ENCODE measurements at regions of chr7 and their contacts with region 1.

Region 1: GRCh38 chr7:66654123-66654732 is 25.5 kb downstream of the KCTD7 start:
- DNase-seq: peak; percentile 100
- ATAC-seq: peak; percentile 94
- H3K4me3 Mint-ChIP-seq: peak overlapping the region; percentile 100
- H3K27ac Mint-ChIP-seq: peak overlapping the region; percentile 98
- H3K4me1 Mint-ChIP-seq: peaks cover 32% of the 10 kb centered on the region
- H3K27me3 Mint-ChIP-seq: no peaks in the 10 kb centered on the region

Region 2: DNA sequence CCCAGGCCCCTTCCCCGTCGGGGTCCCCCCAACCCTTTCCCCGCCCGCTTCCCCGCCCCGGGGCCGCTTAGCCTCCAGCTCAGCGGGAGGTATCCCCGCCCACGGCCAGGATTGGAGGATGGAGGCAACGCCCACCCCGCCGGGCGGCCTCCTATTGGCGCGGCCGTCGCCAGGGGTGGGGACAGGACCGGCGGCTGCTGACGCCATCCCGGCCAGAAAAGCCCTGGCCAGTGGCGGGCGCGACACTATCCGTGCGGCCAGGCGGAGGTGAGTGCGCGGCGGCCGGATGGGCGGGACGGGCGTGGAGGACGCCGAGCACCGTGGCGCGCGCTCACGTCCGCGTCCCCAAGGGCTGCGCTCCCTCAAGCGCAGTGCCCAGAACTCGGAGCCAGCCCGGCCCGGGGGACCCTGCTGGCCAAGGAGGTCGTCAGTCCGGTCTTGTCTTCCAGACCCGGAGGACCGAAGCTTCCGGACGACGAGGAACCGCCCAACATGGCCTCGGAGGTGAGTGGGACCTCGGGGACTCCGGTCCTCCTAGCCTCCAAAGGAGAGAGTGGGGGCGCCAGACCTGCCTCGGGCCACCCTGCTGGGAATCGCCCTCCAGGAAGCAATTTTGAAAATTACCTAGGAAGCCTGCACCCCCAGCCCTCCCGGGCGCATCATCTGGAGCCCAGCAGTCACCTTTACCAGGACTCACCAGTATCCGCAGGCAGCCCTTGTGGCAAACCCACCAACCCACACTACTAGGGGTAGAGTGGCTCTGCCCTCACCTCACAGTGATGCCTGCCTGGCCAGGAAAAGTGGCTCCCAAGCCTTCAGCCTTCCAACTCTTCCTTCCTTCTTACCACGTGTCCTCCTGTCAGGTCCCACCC is 578.4 kb before region 1 on chr7 and contains the start of gene ASL:
- CTCF ChIA-PET with region 1: no interaction called
- POLR2A ChIA-PET with region 1: no interaction called
- intact Hi-C with region 1: loop called in 1 of 2 experiments (anchors 1 kb)
- DNase-seq: peak; percentile 94
- ATAC-seq: peak; percentile 99
- H3K4me3 Mint-ChIP-seq: peak within 1 kb of the TSS; percentile 63
- H3K27ac Mint-ChIP-seq: no peak within 1 kb of the TSS
- H3K4me1 Mint-ChIP-seq: peaks cover 15% of the 10 kb centered on the region
- H3K27me3 Mint-ChIP-seq: no peaks in the 10 kb centered on the region
- total RNA-seq, gene ASL: 12.7 to 18.5 TPM

Region 3: DNA sequence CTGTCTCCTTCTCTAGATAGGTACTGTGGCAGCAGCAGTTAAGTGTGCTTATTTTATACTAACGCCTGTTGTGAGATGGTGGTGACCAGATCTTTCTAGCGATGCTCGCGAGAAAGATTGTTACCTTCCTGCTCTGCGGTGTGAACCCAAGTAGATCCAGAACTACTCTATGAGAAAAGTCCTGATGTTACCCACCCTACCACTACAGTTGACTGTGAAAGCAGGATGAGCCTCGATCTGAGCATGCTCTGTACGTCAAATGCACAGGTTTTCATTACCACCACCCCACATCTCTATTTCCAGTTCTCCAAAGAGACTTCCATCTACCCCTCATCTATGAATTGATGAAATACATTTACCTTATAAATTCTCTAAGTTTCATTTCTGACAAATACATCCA is 90.2 kb before region 1 on chr7:
- CTCF ChIA-PET with region 1: no interaction called
- POLR2A ChIA-PET with region 1: no interaction called
- intact Hi-C with region 1: loop called in 1 of 2 experiments (anchors 10 kb)
- DNase-seq: no peak
- ATAC-seq: no peak
- H3K4me3 Mint-ChIP-seq: no peak overlapping the region
- H3K27ac Mint-ChIP-seq: no peak overlapping the region
- H3K4me1 Mint-ChIP-seq: no peaks in the 10 kb centered on the region
- H3K27me3 Mint-ChIP-seq: no peaks in the 10 kb centered on the region

Region 4: DNA sequence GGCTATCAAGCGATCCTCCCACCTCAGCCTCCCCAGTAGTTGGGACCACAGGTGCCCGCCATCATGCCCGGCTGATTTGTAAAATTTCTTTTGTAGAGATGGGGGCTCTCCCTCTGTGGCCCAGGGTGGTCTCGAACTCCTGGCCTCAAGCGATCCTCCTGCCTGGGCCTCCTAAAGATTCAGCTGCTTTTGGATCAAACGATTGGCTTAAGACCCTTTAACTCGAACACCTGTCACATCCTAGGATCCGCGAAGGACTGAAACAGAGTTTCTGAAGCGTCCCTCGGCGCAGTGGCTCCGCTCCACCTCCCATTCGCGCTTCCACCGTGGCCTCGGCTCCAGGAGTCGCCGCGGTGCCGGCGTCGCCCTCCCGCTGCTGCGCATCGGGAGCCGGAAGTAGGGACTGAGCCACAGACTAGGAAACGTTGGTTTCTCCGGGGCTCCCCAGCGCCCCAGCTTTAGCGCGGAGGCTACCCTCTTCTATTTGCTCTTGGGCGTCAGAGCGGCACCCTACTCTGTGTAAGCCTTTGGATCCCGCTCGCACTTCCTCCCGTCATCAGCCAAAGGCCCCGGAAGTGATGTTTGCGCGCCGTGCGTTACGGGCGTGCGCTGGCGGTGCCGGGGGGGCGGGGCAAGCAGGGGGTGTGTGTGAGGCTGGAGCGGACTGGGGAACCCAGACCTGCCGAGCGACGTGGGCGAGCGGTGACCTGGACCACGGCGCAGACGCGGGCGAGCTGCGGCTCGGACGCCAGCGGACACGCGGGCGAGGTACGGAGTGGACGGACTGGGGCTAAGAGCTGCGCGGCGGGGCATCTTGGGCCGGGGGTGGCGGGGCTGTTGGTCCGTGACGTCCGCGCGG is 27.5 kb after region 1 on chr7:
- CTCF ChIA-PET with region 1: interaction called, 3 read pairs
- POLR2A ChIA-PET with region 1: interaction called, 3 read pairs
- intact Hi-C with region 1: loop called (anchors 1 kb)
- DNase-seq: peak; percentile 98
- ATAC-seq: peak; percentile 95
- H3K4me3 Mint-ChIP-seq: peak overlapping the region; percentile 90
- H3K27ac Mint-ChIP-seq: peak overlapping the region; percentile 92
- H3K4me1 Mint-ChIP-seq: peaks cover 34% of the 10 kb centered on the region
- H3K27me3 Mint-ChIP-seq: no peaks in the 10 kb centered on the region

Region 5: DNA sequence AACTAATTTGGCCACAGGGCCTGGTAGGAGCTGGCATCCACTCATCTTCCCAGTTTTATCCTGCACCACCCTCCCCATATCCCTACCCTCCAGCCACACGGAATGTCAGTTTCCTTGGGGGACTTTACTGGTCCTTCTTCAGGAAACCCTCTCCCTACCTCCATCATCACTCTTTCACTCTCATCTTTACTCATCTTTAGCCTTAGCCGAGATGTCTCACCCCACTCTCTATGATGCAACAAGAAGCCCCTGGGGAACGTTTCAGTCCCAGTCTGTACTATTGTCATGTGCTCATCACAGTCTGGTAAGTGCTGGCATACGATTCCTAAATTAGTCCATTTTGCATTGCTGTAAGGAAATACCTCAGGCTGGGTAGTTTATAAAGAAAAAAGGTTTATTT is 231.9 kb after region 1 on chr7:
- CTCF ChIA-PET with region 1: no interaction called
- POLR2A ChIA-PET with region 1: no interaction called
- intact Hi-C with region 1: loop called in 1 of 2 experiments (anchors 10 kb)
- DNase-seq: peak; percentile 33
- ATAC-seq: peak; percentile 13
- H3K4me3 Mint-ChIP-seq: no peak overlapping the region
- H3K27ac Mint-ChIP-seq: peak overlapping the region; percentile 72
- H3K4me1 Mint-ChIP-seq: peaks cover 44% of the 10 kb centered on the region
- H3K27me3 Mint-ChIP-seq: no peaks in the 10 kb centered on the region